ENCODE measurements at regions of chr7 and their contacts with region 1.

Region 1: DNA sequence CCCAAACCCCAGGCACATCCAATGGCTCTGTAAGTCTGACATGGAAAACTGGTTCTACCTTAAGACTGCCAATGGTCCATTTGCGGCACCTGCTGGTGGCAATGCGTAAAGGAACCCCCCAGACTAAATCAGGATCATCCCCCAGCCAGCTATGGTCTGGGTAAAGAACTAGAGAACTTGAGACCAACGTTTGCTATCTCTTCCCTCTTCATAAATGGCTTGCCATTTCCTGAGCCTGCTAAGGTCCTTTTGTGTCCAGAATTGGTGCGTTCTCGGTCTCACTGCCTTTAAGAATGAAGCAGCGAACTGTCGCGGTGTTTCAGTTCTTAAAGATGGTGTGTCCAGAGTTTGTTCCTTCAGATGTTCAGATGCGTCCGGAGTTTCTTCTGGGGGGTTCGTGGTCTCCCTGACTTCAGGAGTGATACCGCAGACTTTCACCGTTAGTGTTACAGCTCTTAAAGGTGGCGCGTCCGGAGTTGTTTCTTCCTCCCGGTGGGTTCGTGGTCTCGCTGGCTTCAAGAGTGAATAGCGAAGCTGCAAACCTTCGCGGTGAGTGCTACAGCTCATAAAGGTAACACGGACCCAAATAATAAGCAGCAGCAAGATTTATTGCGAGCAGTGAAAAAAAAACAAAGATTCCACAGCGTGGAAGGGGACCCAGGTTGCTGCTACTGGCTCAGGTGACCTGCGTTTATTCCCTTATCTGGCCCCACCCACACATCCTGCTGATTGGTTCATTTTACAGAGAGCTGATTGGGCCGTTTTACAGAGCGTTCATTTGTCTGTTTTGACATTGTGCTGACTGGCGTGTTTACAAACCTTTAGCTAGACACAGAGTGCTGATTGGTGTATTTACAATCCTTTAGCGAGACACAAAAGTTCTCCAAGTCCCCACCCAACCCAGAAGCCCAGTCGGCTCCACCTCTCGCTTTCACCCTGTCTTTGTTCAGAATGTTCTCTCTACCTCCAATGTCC is 95.4 kb downstream of the ELMO1 start:
- DNase-seq: peak; percentile 92
- H3K4me3 Mint-ChIP-seq: peak overlapping the region; percentile 92
- H3K27ac Mint-ChIP-seq: peak overlapping the region; percentile 94
- H3K4me1 Mint-ChIP-seq: peaks cover 73% of the 10 kb centered on the region
- H3K27me3 Mint-ChIP-seq: no peaks in the 10 kb centered on the region

Region 2: DNA sequence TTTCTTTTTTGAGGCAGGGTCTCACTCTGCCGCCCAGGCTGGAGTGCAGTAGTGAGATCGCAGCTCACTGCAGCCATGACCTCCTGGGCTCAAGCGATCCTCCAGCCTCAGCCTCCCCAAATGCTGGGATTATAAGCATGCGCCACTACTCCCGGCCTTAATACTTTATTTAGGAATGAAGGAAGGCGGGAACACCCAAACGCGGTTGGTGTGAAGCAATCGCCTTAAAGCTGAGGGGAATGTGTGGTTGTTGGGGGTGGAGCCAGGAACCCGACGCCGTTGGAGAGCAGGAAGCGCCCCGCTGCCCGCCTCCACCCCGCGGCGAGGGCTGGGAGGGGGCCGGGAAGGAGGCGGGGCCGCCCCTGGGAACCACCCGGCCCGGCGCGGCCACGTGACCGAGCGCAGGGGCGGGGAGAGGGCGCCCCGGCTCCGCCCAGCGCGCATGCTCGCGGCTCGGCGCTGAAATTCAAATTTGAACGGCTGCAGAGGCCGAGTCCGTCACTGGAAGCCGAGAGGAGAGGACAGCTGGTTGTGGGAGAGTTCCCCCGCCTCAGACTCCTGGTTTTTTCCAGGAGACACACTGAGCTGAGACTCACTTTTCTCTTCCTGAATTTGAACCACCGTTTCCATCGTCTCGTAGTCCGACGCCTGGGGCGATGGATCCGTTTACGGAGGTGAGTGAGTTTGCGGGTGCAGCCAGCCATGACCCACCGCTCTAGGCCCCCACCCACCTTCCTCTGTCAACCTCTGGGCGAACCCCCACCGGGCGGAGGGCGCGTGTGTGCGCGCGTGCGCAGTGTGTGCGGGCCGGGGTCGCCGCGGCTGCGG is 963.7 kb before region 1 on chr7 and contains the start of gene ANLN:
- intact Hi-C with region 1: loop called (anchors 5 kb)
- DNase-seq: peak; percentile 97
- H3K4me3 Mint-ChIP-seq: peak within 1 kb of the TSS; percentile 92
- H3K27ac Mint-ChIP-seq: peak within 1 kb of the TSS; percentile 85
- H3K4me1 Mint-ChIP-seq: peaks cover 33% of the 10 kb centered on the region
- H3K27me3 Mint-ChIP-seq: peaks cover 12% of the 10 kb centered on the region
- total RNA-seq, gene ANLN: 35.6 and 35.9 TPM in 2 replicates

Region 3: DNA sequence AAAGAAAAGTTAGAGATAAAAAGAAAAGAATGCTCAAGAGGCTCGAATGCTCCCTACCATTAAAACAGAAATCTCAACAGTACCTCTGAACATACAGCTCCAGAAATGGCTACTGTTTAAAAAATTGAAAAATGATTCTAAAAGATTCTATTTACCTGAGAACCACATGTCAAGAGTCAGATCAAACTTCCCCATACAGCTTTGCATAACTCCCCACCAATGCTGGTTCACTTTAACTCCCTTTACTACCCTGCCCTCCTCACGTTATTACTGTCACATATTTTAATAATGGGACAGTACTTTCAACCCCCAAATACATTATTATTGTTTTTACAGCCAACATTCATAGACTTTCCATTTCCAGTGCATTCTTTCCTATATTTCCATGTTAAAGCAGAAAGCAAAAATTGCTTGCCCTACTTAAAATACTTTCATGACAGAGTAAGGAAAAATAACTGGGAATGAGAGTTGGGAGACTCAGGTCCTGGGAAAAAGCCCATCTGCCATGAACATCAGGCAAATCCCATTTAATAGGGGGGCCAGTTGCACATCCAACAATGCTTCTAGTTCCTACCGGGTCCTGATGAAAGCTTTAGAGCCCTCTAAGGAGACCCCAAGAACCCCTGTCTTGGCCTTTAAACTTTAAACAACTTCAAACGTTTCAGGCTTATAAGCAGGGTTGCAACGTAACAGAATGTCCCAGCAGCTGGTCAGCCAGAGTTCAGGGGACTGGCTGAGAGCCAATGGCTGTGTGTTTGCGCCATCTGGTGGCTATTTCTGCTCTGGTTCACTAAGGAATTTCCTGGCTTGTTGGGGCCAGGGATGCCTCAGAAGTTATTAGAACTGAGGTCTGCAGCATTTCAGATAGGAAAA is 152.0 kb before region 1 on chr7:
- intact Hi-C with region 1: loop called (anchors 2 kb)
- DNase-seq: peak; percentile 83
- H3K4me3 Mint-ChIP-seq: no peak overlapping the region
- H3K27ac Mint-ChIP-seq: no peak overlapping the region
- H3K4me1 Mint-ChIP-seq: peaks cover 12% of the 10 kb centered on the region
- H3K27me3 Mint-ChIP-seq: no peaks in the 10 kb centered on the region

Region 4: DNA sequence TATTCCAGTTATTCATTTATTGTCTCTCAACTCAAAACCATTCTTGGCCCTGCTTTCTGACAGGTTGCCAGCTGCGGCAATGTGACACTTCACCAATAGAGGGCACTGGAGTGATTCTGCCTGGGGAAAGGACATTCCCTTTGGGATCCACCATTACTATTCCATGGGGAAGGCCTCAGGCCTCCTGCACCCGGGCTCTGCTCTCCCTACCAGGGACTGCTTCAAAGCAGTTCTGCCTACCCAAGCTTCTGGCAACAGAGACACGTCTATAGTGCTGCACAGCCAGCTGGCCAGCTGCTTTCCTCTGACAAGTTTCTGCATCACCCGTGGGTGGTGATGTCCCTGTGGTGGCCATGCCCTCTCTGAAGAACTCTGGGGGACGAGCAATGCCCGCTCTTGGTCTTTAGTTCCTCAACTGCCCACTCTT is 68.4 kb before region 1 on chr7:
- intact Hi-C with region 1: loop called (anchors 2 kb)
- DNase-seq: peak; percentile 82
- H3K4me3 Mint-ChIP-seq: no peak overlapping the region
- H3K27ac Mint-ChIP-seq: no peak overlapping the region
- H3K4me1 Mint-ChIP-seq: peaks cover 34% of the 10 kb centered on the region
- H3K27me3 Mint-ChIP-seq: no peaks in the 10 kb centered on the region

Region 5: GRCh38 chr7:37365405-37365804 is 12.1 kb after region 1 on chr7:
- intact Hi-C with region 1: loop called (anchors 1 kb)
- DNase-seq: peak; percentile 65
- H3K4me3 Mint-ChIP-seq: peak overlapping the region; percentile 1
- H3K27ac Mint-ChIP-seq: peak overlapping the region; percentile 9
- H3K4me1 Mint-ChIP-seq: peaks cover 39% of the 10 kb centered on the region
- H3K27me3 Mint-ChIP-seq: no peaks in the 10 kb centered on the region

Region 6: DNA sequence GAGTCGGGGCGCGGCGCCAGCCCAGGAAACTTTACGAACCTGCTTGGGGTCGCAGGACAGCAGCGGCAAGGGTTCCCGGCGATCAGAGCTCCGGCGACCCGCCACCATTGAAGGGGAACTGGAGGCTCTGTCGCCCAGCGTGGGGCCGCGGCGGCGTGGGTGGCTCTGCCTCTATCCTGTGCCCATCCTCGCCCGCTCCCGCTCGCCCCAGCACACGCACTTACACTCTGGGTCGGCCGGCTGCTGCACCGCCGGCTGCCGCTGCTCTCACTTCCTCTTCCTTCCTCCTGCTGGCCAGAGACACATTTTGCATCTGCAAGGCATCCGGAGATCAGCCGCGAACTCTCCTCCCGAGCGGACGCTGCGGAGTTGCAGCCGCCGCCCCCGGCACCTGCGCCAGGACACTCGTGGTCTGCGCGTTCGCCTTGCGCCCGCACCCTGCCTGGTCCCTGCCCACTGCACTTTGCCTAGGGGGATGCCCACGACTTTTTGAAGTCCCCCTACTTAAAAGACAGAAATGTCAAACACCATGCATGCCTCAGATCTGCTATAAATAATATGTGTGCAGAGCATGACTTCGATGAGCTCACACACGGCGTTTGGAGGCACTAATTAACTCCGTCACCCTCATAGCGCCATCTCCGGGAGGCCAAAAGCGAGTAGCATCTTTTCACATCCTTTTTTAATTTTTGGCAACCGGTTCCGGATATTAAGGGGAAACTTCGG is 95.5 kb after region 1 on chr7 and contains the start of gene ELMO1:
- intact Hi-C with region 1: loop called (anchors 1 kb)
- DNase-seq: peak; percentile 94
- H3K4me3 Mint-ChIP-seq: peak within 1 kb of the TSS; percentile 98
- H3K27ac Mint-ChIP-seq: peak within 1 kb of the TSS; percentile 99
- H3K4me1 Mint-ChIP-seq: peaks cover 39% of the 10 kb centered on the region
- H3K27me3 Mint-ChIP-seq: peaks cover 6% of the 10 kb centered on the region
- total RNA-seq, gene ELMO1: 110 and 121 TPM in 2 replicates

Measured in activated CD4-positive, alpha-beta T cell treated with anti-CD3 and anti-CD28 coated beads, Interleukin-2, amount 10 ng/mL, durations not matched to agents 24 days and 14 days (primary cell).